Activated CD8-positive, alpha-beta T cell treated with anti-CD3 and anti-CD28 coated beads for 36 hours (primary cell): ENCODE measurements at regions of chr16 and their contacts with region 1.

Region 1: DNA sequence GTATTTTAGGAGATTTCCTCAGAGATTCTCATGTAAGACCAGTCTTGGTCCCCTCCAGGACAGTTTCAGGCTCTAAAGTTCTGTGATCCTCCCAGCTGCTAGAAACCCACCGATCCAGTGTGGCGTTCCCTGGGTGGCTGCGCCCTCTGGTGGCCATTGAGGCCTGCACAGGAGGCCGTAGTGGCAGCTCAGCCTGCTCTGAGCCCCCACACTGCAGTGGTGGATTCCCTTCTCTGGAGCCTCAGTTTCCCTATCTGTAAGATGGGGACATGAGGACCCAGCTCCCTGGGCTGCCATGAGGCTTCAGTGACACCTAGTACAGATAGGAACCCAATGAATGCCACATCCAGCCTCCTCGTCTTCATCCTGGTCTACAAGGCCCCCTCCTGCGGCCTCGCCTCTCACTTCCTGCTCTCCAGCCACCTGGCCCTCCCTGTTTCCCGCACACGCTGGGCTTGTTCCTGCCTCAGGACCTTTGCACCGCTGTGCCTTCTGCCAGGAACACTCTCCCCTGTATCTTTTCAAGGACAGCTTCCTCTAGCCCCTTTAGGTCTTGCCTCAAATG is 16.5 kb downstream of the CCDC102A start:
- DNase-seq: peak; percentile 90
- ATAC-seq: peak; percentile 98
- H3K4me3 Mint-ChIP-seq: no peak overlapping the region
- H3K27ac Mint-ChIP-seq: peak overlapping the region; percentile 47
- H3K4me1 Mint-ChIP-seq: peaks cover 4% of the 10 kb centered on the region
- H3K27me3 Mint-ChIP-seq: no peaks in the 10 kb centered on the region
- CTCF ChIP-seq: peak; percentile 98

Region 2: GRCh38 chr16:57413301-57413730 is 106.6 kb before region 1 on chr16:
- CTCF ChIA-PET with region 1: interaction called, 76 read pairs
- POLR2A ChIA-PET with region 1: no interaction called
- intact Hi-C with region 1: loop called (anchors 5 kb)
- DNase-seq: no peak
- ATAC-seq: no peak
- H3K4me3 Mint-ChIP-seq: no peak overlapping the region
- H3K27ac Mint-ChIP-seq: no peak overlapping the region
- H3K4me1 Mint-ChIP-seq: peaks cover 12% of the 10 kb centered on the region
- H3K27me3 Mint-ChIP-seq: no peaks in the 10 kb centered on the region
- CTCF ChIP-seq: no peak

Region 3: DNA sequence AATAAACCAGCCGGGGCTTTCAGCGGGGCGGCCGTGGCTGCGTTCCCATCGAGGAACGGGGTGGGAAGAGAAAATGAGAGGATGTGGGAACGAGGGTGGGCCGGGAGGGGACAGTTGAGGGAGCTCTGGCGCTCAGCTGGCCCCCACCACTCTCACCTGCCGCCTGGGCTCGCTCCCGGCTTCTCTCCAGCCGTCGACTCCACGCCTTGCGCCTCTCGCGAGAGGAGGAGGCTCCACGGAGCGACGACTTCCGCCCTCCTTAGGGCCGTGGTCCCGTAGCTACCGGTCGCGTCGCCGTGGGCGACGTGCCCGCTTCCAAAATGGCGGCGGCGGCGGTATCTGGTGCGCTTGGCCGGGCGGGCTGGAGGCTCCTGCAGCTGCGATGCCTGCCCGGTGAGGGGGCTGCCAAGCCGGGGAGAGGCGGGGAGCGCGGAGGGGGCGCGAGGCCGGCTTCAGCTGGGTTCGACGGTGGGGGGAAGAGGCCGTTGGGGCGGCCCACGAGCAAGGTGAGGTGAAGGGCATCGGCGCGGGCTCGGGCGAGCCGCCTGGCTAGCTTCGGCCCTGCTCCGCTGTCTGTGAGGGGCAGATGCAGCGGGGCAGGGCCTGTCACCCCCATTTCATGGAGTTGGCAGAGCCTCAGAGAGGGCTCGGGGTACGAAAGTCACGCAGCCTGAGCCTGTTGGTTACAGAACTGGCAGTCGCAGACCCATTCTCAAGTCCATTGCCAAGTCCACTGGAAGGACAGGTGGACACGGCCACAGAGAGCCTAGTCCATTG is 72.5 kb before region 1 on chr16 and contains the starts of genes CIAPIN1 and COQ9:
- CTCF ChIA-PET with region 1: interaction called, 16 read pairs
- POLR2A ChIA-PET with region 1: no interaction called
- intact Hi-C with region 1: no loop called
- DNase-seq: peak; percentile 95
- ATAC-seq: peak; percentile 99
- H3K4me3 Mint-ChIP-seq: peak within 1 kb of the TSS; percentile 94
- H3K27ac Mint-ChIP-seq: peak within 1 kb of the TSS; percentile 91
- H3K4me1 Mint-ChIP-seq: peaks cover 47% of the 10 kb centered on the region
- H3K27me3 Mint-ChIP-seq: no peaks in the 10 kb centered on the region
- CTCF ChIP-seq: no peak
- total RNA-seq, gene CIAPIN1: 53.3 to 53.4 TPM
- total RNA-seq, gene COQ9: 39.3 to 39.6 TPM

Region 4: DNA sequence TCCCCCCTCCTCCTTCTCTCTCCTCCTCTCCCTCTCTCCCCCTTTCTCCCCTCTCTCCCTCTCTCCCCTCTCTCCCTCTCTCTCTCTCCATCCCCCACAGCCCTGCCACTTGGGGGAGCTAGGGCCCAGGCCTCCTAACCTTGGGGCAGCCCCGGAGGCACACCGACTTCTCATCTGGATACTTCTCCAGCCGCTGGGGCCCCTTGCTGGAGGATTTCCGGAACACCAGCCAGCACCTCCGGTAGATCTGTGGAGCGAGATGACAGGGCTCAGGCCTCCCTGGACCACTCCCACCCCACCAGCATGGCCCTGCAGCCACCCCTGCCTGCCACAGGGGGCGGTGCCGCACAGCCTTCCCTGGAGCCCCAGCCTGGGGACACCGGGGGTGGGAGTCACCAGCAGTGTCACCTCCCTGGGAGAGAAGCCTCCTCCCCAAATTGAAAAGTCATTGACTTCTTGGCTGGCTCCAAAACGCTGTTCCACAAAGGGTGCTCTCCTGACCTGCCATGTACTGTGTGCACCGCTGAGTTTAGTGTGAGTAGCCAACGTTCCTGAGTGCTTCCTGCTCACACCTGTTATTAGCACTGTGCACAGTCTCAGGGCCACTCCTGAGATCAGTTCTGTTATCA is 44.1 kb before region 1 on chr16:
- CTCF ChIA-PET with region 1: interaction called, 71 read pairs
- POLR2A ChIA-PET with region 1: interaction called, 3 read pairs
- intact Hi-C with region 1: loop called (anchors 2 kb)
- DNase-seq: peak; percentile 93
- ATAC-seq: peak; percentile 98
- H3K4me3 Mint-ChIP-seq: peak overlapping the region; percentile 22
- H3K27ac Mint-ChIP-seq: peak overlapping the region; percentile 48
- H3K4me1 Mint-ChIP-seq: peaks cover 15% of the 10 kb centered on the region
- H3K27me3 Mint-ChIP-seq: no peaks in the 10 kb centered on the region
- CTCF ChIP-seq: peak; percentile 97

Region 5: GRCh38 chr16:57500578-57501111 is 19.2 kb before region 1 on chr16:
- CTCF ChIA-PET with region 1: interaction called, 13 read pairs
- POLR2A ChIA-PET with region 1: no interaction called
- intact Hi-C with region 1: no loop called
- DNase-seq: no peak
- ATAC-seq: peak; percentile 86
- H3K4me3 Mint-ChIP-seq: no peak overlapping the region
- H3K27ac Mint-ChIP-seq: peak overlapping the region; percentile 49
- H3K4me1 Mint-ChIP-seq: peaks cover 11% of the 10 kb centered on the region
- H3K27me3 Mint-ChIP-seq: no peaks in the 10 kb centered on the region
- CTCF ChIP-seq: no peak

Region 6: GRCh38 chr16:57530104-57530521 is 10.2 kb after region 1 on chr16:
- CTCF ChIA-PET with region 1: interaction called, 14 read pairs
- POLR2A ChIA-PET with region 1: interaction called, 5 read pairs
- intact Hi-C with region 1: no loop called
- DNase-seq: peak; percentile 91
- ATAC-seq: peak; percentile 96
- H3K4me3 Mint-ChIP-seq: peak overlapping the region; percentile 54
- H3K27ac Mint-ChIP-seq: peak overlapping the region; percentile 96
- H3K4me1 Mint-ChIP-seq: peaks cover 53% of the 10 kb centered on the region
- H3K27me3 Mint-ChIP-seq: no peaks in the 10 kb centered on the region
- CTCF ChIP-seq: no peak